ENCODE measurements at regions of chr6 and their contacts with region 1.

Region 1: GRCh38 chr6:85642774-85643536 is at the start of gene SYNCRIP:
- DNase-seq: peak; percentile 99
- H3K4me3 ChIP-seq: peak within 1 kb of the TSS; percentile 83 to 100 (median 92)
- H3K27ac ChIP-seq: peak within 1 kb of the TSS; percentile 95 to 100 (median 98)
- H3K4me1 ChIP-seq: peaks cover 36 to 51% (median 48%) of the 10 kb centered on the region in 4 donors
- H3K27me3 ChIP-seq: no peaks in the 10 kb centered on the region
- CTCF ChIP-seq: no peak
- EP300 ChIP-seq: no peak
- POLR2A ChIP-seq: peak; percentile 96
- total RNA-seq, gene SYNCRIP: 74.4 to 88.1 (median 80.7) TPM

Region 2: DNA sequence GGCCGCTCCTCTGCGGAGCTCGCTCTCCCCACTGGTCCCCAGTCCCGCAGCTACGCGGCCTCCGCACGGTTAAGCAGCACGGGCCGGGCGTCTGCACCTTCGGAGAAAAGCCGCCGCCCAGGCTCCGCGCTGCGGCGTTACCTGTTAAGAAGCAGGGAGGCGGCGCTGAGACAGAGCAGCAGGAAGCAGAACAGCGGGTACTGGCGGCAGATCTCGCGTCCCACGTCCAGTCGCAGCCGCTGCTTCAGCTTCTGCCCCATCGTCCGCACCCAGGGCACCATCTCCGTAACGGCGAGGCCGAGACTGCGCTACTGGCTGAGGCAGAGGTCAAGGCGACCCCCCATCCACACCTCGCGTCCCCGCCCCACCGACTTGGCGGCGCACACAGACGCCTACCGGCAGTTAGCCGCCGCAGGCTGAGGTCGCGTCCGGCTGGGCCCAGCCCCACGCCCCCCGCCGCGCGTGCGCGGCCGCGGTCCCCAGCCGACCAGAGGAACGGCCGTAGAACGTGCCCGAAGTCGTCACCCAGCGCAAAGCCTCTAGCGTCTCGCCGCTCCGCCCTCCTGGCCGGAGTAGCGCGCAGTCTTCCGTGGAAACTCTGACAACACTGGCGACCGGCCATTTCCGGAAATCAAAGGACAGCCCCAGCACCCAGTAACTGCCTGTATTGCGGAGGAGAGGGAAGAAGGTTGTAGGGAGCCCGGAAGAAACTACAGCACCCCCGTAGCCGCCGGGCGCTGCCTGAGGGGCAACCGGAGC is 49.3 kb before region 1 on chr6 and contains the start of gene SNX14:
- intact Hi-C with region 1: loop called (anchors 2 kb)
- DNase-seq: peak; percentile 96
- H3K4me3 ChIP-seq: peak within 1 kb of the TSS; percentile 76 to 81 (median 79)
- H3K27ac ChIP-seq: peak within 1 kb of the TSS; percentile 89 to 96 (median 95)
- H3K4me1 ChIP-seq: peaks cover 20 to 38% (median 28%) of the 10 kb centered on the region in 4 donors
- H3K27me3 ChIP-seq: no peaks in the 10 kb centered on the region
- CTCF ChIP-seq: peak in 1 of 3 experiments; percentile 14
- EP300 ChIP-seq: no peak
- POLR2A ChIP-seq: peak; percentile 63
- total RNA-seq, gene SNX14: 39.6 to 60.6 (median 41.5) TPM

Region 3: GRCh38 chr6:85678602-85679444 is 35.9 kb after region 1 on chr6:
- intact Hi-C with region 1: loop called (anchors 1 kb)
- DNase-seq: peak; percentile 100
- H3K4me3 ChIP-seq: peak overlapping the region; percentile 75 to 85 (median 78)
- H3K27ac ChIP-seq: peak overlapping the region; percentile 90 to 92 (median 91)
- H3K4me1 ChIP-seq: peaks cover 21 to 43% (median 38%) of the 10 kb centered on the region in 4 donors
- H3K27me3 ChIP-seq: no peaks in the 10 kb centered on the region
- CTCF ChIP-seq: peak in 1 of 3 experiments; percentile 14
- EP300 ChIP-seq: no peak
- POLR2A ChIP-seq: peak; percentile 99